Activated naive CD4-positive, alpha-beta T cell treated with anti-CD3 and anti-CD28 coated beads, Interleukin-2, amount 10 ng/mL, durations not matched to agents 7 days and 5 days (primary cell): ENCODE measurements at regions of chr14 and their contacts with region 1.

Region 1: DNA sequence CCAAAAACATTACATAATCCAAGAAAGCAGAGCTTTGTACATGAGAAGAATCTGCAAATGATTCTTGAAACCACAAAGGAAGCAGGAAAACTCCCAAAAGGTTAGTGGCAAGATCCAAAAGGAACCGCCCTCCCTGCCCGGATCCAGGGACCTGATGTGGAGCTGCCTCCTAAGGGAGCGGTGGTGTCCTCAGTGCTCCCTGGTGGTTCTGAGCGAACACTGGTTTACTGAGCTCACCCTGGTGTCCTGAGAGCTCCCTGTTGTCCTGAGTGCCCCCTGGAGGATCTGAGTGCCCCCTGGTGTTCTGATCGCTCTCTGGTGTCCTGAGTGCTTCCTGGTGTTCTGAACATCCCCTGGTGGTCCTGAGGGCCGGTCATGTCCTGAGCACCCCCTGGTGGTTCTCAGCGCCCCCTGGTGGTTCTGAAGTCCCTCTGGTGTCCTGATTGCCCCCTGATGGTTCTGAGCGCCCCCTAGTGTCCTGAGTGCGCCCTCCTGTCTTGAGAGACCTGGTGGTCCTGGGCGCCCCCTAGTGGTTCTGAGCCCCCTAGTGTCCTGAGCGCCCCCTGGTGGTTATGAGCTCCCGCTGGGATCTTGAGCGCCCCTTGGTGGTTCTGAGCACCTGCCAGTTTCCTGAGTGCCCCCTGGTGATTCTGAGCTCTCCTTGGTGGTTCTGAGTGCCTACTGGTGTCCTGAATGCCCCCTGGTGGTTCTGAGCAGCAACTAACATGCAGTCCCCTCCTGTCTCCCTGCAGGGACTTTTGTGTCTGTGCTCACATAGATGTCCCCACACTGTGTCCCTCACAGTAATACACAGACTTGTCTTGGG is 891.1 kb downstream of the TMEM121 start:
- DNase-seq: peak; percentile 90
- H3K4me3 Mint-ChIP-seq: no peak overlapping the region
- H3K27ac Mint-ChIP-seq: peak overlapping the region; percentile 33
- H3K4me1 Mint-ChIP-seq: no peaks in the 10 kb centered on the region
- H3K27me3 Mint-ChIP-seq: peaks cover 30% of the 10 kb centered on the region

Region 2: DNA sequence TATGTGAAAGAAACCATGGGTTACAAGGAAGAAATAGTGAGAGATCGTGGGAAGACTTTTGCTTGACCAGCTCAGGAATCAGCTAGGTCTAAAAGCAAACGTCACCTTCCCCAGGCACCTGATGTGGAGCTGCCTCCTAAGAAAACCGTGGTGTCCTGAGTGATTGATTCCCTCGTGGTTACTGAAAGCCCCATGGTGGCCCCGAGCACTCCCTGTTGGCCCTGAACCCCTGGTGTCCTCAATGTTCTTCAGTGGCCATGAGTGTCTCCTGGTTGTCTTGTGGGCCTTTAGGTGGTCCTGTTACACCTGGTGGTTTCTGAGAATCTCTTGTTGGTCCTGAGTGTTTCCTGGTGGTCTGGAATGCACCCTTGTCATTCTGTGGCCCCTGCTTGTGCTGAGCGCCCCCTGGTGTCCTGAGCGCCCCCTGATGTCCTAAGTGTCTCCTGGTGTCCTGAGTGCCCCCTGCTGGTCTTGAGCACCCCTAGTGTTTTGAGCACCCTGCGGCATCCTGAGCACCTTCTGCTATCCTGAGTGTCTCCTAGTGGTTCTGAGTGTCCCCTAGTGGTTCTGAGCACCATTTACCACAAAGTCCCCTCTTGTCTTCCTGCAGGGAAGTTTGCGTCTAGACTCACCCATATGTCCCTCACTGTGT is 372.4 kb before region 1 on chr14:
- CTCF ChIA-PET with region 1: no interaction called
- DNase-seq: peak; percentile 91
- H3K4me3 Mint-ChIP-seq: no peak overlapping the region
- H3K27ac Mint-ChIP-seq: no peak overlapping the region
- H3K4me1 Mint-ChIP-seq: no peaks in the 10 kb centered on the region
- H3K27me3 Mint-ChIP-seq: peaks cover 16% of the 10 kb centered on the region

Region 3: DNA sequence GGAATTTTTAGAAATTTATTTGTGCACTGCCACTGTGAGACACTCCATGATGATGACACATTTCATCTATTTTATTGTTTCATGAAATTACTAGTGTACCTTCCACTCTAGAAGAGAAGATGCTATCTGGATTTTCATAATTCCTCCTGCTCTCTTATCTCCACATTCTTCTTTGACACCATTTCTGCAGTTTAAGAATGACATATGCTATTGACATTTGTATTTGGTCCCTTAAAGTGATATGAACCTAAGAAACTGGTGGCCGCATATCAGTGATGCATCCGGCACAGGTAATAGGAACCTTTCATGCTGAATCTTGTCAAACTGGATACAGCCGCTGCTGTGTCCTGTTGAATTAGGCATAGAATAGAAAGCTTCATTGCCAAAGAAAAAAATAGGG is 194.7 kb before region 1 on chr14:
- CTCF ChIA-PET with region 1: no interaction called
- DNase-seq: no peak
- H3K4me3 Mint-ChIP-seq: no peak overlapping the region
- H3K27ac Mint-ChIP-seq: peak overlapping the region; percentile 83
- H3K4me1 Mint-ChIP-seq: peaks cover 34% of the 10 kb centered on the region
- H3K27me3 Mint-ChIP-seq: peaks cover 9% of the 10 kb centered on the region

Region 4: DNA sequence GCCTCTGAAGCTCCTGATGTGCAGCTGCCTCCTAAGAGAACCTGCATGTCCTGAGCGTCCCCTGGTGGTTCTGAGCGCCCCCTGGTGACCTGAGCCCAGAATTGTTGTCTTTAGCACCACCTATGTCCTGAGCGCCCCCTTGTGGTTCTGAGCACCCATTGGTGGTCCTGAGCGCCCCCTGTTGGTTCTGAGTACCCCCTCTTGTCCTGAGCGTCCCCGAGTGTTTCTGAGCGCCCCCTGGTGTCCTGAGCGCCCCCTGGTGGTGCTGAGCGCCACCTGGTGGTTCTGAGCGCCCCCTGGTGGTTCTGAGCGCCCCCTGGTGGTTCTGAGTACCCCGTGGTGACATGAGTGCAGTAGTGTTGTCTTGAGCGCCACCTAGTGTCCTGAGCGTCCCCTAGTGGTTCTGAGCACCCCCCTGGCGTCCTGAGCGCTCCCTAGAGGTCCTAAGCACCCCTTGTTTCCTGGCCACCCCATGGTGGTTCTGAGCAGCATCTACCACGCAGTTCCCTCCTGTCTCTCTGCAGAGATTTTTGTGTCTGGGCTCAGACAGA is 108.5 kb before region 1 on chr14:
- CTCF ChIA-PET with region 1: interaction called, 46 read pairs
- DNase-seq: peak; percentile 87
- H3K4me3 Mint-ChIP-seq: peak overlapping the region; percentile 30
- H3K27ac Mint-ChIP-seq: peak overlapping the region; percentile 80
- H3K4me1 Mint-ChIP-seq: no peaks in the 10 kb centered on the region
- H3K27me3 Mint-ChIP-seq: peaks cover 34% of the 10 kb centered on the region

Region 5: GRCh38 chr14:106390401-106390800 is 27.0 kb before region 1 on chr14:
- CTCF ChIA-PET with region 1: interaction called, 39 read pairs
- DNase-seq: no peak
- H3K4me3 Mint-ChIP-seq: no peak overlapping the region
- H3K27ac Mint-ChIP-seq: no peak overlapping the region
- H3K4me1 Mint-ChIP-seq: peaks cover 6% of the 10 kb centered on the region
- H3K27me3 Mint-ChIP-seq: peaks cover 29% of the 10 kb centered on the region

Region 6: GRCh38 chr14:106491851-106492250 is 74.4 kb after region 1 on chr14:
- CTCF ChIA-PET with region 1: interaction called, 23 read pairs
- DNase-seq: peak; percentile 44
- H3K4me3 Mint-ChIP-seq: no peak overlapping the region
- H3K27ac Mint-ChIP-seq: no peak overlapping the region
- H3K4me1 Mint-ChIP-seq: peaks cover 11% of the 10 kb centered on the region
- H3K27me3 Mint-ChIP-seq: peaks cover 3% of the 10 kb centered on the region

Region 7: DNA sequence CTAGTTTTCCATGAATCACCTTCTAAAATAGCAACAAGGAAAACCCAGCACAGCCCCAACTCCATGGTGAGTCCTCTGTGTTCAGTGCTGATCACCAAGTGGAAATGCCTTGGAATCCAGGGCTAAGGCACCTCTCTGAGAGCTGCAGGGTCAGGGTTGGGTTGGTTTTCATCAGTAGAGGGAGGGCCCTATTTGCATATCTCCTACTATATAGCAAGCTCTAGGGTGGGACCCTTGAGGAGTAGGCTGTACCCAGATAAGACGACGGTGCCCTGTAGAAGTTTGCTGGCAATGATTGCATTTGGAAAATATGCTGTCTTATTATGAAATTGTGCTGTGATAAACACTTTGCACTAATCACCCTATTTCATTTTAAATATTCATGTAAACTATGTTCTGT is 120.8 kb after region 1 on chr14:
- CTCF ChIA-PET with region 1: interaction called, 22 read pairs
- DNase-seq: no peak
- H3K4me3 Mint-ChIP-seq: no peak overlapping the region
- H3K27ac Mint-ChIP-seq: no peak overlapping the region
- H3K4me1 Mint-ChIP-seq: peaks cover 13% of the 10 kb centered on the region
- H3K27me3 Mint-ChIP-seq: peaks cover 47% of the 10 kb centered on the region